Activated T-helper 1 cell treated with anti-CD3 and anti-CD28 coated beads, Interleukin-12 subunit alpha, Interleukin-12 subunit beta, Interleukin-2, Interleukin-4 antibody, amounts not matched to agents 30 ng/mL and 10 ng/mL and 1 ng/mL, durations not matched to agents 14 hours and 24 hours and 36 hours (primary cell): ENCODE measurements at regions of chr13 and their contacts with region 1.

Region 1: GRCh38 chr13:27953676-27954405 is 15.3 kb downstream of the CDX2 start:
- DNase-seq: peak; percentile 47
- H3K4me3 Mint-ChIP-seq: peak overlapping the region; percentile 77
- H3K27ac Mint-ChIP-seq: peak overlapping the region; percentile 13
- H3K4me1 Mint-ChIP-seq: peaks cover 9% of the 10 kb centered on the region
- H3K27me3 Mint-ChIP-seq: peaks cover 62% of the 10 kb centered on the region

Region 2: DNA sequence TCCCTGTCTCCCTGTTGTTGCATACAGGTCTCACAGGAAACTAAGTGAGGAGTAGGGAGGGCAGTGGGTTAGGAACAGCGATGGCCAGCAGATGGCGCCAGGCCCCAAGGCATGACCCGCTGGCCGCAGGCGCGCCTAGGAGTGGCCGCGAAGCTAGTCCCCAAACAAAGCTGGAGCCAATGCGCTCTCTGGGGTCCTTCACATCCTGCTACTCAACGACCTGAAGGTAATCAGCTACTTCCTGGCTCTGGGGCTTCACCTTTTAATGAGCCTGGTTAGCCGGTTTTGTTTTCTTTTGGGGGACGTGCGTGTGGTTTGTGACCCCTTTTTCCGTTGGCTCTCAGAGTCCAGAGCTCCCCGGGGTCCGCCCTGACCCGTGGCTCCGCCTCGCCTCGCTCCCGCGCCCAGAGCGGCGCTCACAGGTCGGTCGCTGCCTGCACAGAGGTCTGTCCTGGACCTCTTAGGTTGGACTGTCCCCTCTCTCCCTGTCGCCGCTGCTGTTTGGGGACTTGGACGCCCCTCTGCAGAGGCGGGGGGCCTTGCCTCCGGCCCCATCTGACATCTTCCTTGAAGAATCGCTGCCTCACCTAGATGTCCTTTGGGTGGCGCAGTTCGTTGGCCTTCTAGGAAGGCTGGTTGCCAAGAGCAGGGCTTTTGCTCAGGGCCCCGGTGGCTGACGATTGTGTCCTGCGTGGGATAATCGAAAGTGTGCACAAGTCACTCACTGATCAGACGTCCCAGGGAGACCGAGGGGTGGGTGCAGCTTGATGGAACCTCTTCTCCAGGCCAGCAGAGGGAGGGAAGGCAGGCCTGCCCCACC is 591.6 kb before region 1 on chr13:
- intact Hi-C with region 1: loop called (anchors 1 kb)
- DNase-seq: peak; percentile 71
- H3K4me3 Mint-ChIP-seq: peak overlapping the region; percentile 49
- H3K27ac Mint-ChIP-seq: no peak overlapping the region
- H3K4me1 Mint-ChIP-seq: no peaks in the 10 kb centered on the region
- H3K27me3 Mint-ChIP-seq: peaks cover 25% of the 10 kb centered on the region

Region 3: DNA sequence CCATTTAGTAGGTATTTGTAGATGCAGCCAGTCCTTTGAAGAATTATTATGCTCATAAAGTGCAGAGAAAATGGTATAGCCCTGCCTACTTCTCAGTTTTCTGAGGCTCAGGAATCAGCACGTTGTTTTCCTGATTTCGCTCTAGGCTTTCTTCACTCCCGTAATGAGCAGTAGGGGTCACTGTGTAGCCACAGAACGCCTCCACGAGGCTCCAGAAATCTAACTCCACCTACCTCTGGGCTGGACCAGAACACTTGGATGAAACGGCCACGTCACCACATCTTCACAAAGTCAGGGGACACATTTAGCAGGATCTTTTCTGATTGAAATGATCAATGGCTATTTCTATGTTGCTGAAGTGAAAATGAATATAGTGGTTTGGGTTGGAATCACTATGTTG is 579.2 kb before region 1 on chr13:
- intact Hi-C with region 1: loop called (anchors 1 kb)
- DNase-seq: peak; percentile 38
- H3K4me3 Mint-ChIP-seq: no peak overlapping the region
- H3K27ac Mint-ChIP-seq: no peak overlapping the region
- H3K4me1 Mint-ChIP-seq: peaks cover 26% of the 10 kb centered on the region
- H3K27me3 Mint-ChIP-seq: peaks cover 26% of the 10 kb centered on the region

Region 4: GRCh38 chr13:27868641-27869435 is 85.0 kb before region 1 on chr13:
- intact Hi-C with region 1: loop called (anchors 2 kb)
- DNase-seq: no peak
- H3K4me3 Mint-ChIP-seq: no peak overlapping the region
- H3K27ac Mint-ChIP-seq: no peak overlapping the region
- H3K4me1 Mint-ChIP-seq: no peaks in the 10 kb centered on the region
- H3K27me3 Mint-ChIP-seq: peaks cover 23% of the 10 kb centered on the region

Region 5: GRCh38 chr13:27923794-27924528 is 29.9 kb before region 1 on chr13:
- intact Hi-C with region 1: loop called (anchors 2 kb)
- DNase-seq: no peak
- H3K4me3 Mint-ChIP-seq: no peak overlapping the region
- H3K27ac Mint-ChIP-seq: peak overlapping the region; percentile 66
- H3K4me1 Mint-ChIP-seq: peaks cover 7% of the 10 kb centered on the region
- H3K27me3 Mint-ChIP-seq: peaks cover 78% of the 10 kb centered on the region

Region 6: GRCh38 chr13:27968316-27969081 is 14.7 kb after region 1 on chr13:
- intact Hi-C with region 1: loop called (anchors 2 kb)
- DNase-seq: no peak
- H3K4me3 Mint-ChIP-seq: no peak overlapping the region
- H3K27ac Mint-ChIP-seq: no peak overlapping the region
- H3K4me1 Mint-ChIP-seq: no peaks in the 10 kb centered on the region
- H3K27me3 Mint-ChIP-seq: peaks cover 72% of the 10 kb centered on the region

Region 7: DNA sequence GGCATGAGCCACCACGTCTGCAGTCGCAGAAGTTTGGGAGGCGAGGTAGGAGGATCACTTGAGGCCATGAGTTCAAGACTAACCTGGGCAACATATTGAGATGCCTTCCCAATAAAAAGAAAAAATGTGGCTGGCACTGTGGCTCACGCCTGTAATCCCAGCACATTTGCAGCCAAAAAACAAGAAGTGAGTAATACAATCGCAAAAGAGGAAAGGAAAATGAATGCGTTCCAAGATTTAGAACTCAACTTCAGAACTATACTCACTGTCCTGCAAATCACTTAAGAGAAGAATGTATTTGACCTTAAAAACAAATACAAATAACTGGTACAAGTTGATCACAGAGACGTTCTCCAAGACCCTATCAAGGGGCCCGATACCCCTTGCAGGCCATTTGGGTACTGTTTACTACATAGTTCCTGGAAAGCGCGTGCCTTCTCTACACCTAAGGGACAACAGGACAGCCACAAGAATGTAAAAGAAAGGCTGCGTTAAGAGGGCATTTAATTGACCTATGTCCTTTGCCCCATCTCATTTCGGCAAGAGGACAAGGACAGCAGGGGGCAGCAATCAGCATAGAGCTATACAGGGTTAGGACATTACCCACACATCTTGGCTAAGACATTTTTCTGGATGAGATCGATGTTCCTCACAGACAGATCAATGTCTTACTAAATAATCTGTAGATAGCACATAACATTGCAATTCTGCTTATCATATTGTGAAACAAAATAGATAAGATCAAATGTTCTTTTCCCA is 105.2 kb after region 1 on chr13:
- intact Hi-C with region 1: no loop called
- DNase-seq: peak; percentile 8
- H3K4me3 Mint-ChIP-seq: no peak overlapping the region
- H3K27ac Mint-ChIP-seq: no peak overlapping the region
- H3K4me1 Mint-ChIP-seq: no peaks in the 10 kb centered on the region
- H3K27me3 Mint-ChIP-seq: peaks cover 21% of the 10 kb centered on the region